ENCODE measurements at regions of chr19 and their contacts with region 1.

Region 1: DNA sequence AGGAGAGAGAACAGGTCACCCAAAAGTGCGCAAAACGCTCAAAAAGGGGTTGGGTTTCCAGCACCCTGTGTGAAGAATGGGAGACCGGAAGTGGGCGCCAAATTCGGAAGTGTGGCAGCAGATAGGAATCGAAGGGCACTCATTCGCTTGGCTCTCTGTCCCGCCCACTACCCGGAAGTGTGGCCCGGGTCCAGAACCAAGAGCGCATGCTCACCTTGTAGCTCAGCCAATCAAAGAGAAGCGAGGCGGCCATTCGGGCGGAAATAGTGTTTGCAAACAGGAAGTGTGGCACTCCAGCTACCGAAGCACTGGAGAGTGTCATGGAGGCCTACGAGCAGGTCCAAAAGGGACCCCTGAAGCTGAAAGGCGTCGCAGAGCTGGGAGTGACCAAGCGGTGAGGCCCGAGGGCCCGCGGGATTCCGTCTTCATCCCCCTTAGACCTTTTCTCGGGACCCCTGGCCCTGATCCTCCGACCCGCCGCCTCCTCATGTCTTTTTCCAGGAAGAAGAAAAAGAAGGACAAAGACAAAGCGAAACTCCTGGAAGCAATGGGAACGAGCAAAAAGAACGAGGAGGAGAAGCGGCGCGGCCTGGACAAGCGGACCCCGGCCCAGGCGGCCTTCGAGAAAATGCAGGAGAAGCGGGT is at the start of gene FAM32A:
- DNase-seq: peak; percentile 100
- H3K4me3 ChIP-seq: peak within 1 kb of the TSS; percentile 76 to 99 (median 97)
- H3K27ac ChIP-seq: peak within 1 kb of the TSS; percentile 89 to 94
- H3K4me1 ChIP-seq: peaks cover 0 to 26% (median 21%) of the 10 kb centered on the region in 4 experiments
- H3K27me3 ChIP-seq: no peaks in the 10 kb centered on the region

Region 2: GRCh38 chr19:16041299-16041990 is 143.8 kb before region 1 on chr19:
- CTCF ChIA-PET with region 1: interaction called, 12 read pairs
- POLR2A ChIA-PET with region 1: interaction called, 3 read pairs
- DNase-seq: peak; percentile 58 to 76 (median 70)
- H3K4me3 ChIP-seq: peak overlapping the region in 4 of 7 experiments; percentile 34 to 63 (median 49)
- H3K27ac ChIP-seq: no peak overlapping the region
- H3K4me1 ChIP-seq: peaks cover 0 to 10% (median 6%) of the 10 kb centered on the region in 4 experiments
- H3K27me3 ChIP-seq: no peaks in the 10 kb centered on the region

Region 3: GRCh38 chr19:16062789-16063188 is 122.5 kb before region 1 on chr19:
- CTCF ChIA-PET with region 1: interaction called, 18 read pairs
- POLR2A ChIA-PET with region 1: no interaction called
- DNase-seq: peak in 2 of 3 donors; percentile 67 to 78
- H3K4me3 ChIP-seq: no peak overlapping the region
- H3K27ac ChIP-seq: no peak overlapping the region
- H3K4me1 ChIP-seq: peaks cover 0 to 15% (median 4%) of the 10 kb centered on the region in 4 experiments
- H3K27me3 ChIP-seq: no peaks in the 10 kb centered on the region

Region 4: DNA sequence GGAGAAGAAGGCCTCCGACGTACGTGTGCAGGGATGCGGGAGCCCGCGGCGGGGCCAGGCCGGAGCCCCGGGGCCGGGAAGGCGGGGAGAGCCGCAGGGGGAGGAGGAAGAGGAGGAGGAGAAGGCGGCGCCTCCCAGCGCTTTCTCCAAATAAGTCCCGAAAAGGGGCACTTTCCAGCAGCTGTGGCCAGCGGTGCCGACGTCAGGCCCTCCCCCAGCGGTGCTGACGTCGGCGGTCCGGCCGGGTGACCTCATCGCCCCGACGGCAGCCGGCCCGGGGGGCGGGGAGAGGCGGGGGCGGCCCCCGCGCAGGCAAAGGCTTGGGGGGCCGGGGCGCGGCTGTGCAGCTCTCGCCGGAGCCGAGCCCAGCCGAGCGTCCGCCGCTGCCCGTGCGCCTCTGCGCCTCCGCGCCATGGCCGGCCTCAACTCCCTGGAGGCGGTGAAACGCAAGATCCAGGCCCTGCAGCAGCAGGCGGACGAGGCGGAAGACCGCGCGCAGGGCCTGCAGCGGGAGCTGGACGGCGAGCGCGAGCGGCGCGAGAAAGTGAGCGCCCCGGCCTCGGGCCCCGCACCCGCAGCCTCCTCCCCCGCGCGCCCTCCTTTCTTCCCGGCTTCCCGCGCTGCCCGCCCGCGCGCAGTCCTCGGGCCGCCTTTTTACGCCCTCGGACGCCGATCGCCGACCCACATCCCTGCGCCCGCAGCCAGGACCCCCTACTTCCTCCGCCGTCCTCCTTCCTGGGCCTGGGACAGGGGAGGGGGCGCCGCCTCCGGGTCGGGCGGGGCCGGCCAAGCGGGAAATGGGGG is 108.9 kb before region 1 on chr19 and contains the start of gene TPM4:
- CTCF ChIA-PET with region 1: interaction called, 11 read pairs
- POLR2A ChIA-PET with region 1: interaction called, 3 read pairs
- DNase-seq: peak; percentile 80 to 89 (median 88)
- H3K4me3 ChIP-seq: peak within 1 kb of the TSS; percentile 76 to 98 (median 85)
- H3K27ac ChIP-seq: peak within 1 kb of the TSS; percentile 74 to 87
- H3K4me1 ChIP-seq: peaks cover 13 to 81% (median 71%) of the 10 kb centered on the region in 4 experiments
- H3K27me3 ChIP-seq: no peaks in the 10 kb centered on the region

Region 5: GRCh38 chr19:16118489-16119033 is 66.7 kb before region 1 on chr19:
- CTCF ChIA-PET with region 1: interaction called, 27 read pairs
- POLR2A ChIA-PET with region 1: no interaction called
- DNase-seq: peak; percentile 82 to 95 (median 94)
- H3K4me3 ChIP-seq: peak overlapping the region in 4 of 7 experiments; percentile 20 to 49 (median 34)
- H3K27ac ChIP-seq: peak overlapping the region; percentile 46 to 65
- H3K4me1 ChIP-seq: peaks cover 7 to 69% (median 67%) of the 10 kb centered on the region in 4 experiments
- H3K27me3 ChIP-seq: no peaks in the 10 kb centered on the region

Region 6: GRCh38 chr19:16168465-16169081 is 16.7 kb before region 1 on chr19:
- CTCF ChIA-PET with region 1: interaction called, 22 read pairs
- POLR2A ChIA-PET with region 1: no interaction called
- DNase-seq: peak; percentile 75 to 97 (median 94)
- H3K4me3 ChIP-seq: peak overlapping the region in 1 of 7 experiments; percentile 0
- H3K27ac ChIP-seq: peak overlapping the region in 1 of 2 experiments; percentile 52
- H3K4me1 ChIP-seq: peaks cover 0 to 46% (median 35%) of the 10 kb centered on the region in 4 experiments
- H3K27me3 ChIP-seq: no peaks in the 10 kb centered on the region

Region 7: GRCh38 chr19:16197622-16198369 is 12.6 kb after region 1 on chr19 and contains the start of gene AP1M1:
- CTCF ChIA-PET with region 1: interaction called, 28 read pairs
- POLR2A ChIA-PET with region 1: interaction called, 3 read pairs
- DNase-seq: peak; percentile 95 to 97 (median 97)
- H3K4me3 ChIP-seq: peak within 1 kb of the TSS; percentile 78 to 98 (median 93)
- H3K27ac ChIP-seq: peak within 1 kb of the TSS; percentile 85 to 88
- H3K4me1 ChIP-seq: peaks cover 4 to 32% (median 21%) of the 10 kb centered on the region in 4 experiments
- H3K27me3 ChIP-seq: no peaks in the 10 kb centered on the region

Measured in common myeloid progenitor, CD34-positive (primary cell).